ENCODE measurements at regions of chr2 and their contacts with region 1.

Region 1: DNA sequence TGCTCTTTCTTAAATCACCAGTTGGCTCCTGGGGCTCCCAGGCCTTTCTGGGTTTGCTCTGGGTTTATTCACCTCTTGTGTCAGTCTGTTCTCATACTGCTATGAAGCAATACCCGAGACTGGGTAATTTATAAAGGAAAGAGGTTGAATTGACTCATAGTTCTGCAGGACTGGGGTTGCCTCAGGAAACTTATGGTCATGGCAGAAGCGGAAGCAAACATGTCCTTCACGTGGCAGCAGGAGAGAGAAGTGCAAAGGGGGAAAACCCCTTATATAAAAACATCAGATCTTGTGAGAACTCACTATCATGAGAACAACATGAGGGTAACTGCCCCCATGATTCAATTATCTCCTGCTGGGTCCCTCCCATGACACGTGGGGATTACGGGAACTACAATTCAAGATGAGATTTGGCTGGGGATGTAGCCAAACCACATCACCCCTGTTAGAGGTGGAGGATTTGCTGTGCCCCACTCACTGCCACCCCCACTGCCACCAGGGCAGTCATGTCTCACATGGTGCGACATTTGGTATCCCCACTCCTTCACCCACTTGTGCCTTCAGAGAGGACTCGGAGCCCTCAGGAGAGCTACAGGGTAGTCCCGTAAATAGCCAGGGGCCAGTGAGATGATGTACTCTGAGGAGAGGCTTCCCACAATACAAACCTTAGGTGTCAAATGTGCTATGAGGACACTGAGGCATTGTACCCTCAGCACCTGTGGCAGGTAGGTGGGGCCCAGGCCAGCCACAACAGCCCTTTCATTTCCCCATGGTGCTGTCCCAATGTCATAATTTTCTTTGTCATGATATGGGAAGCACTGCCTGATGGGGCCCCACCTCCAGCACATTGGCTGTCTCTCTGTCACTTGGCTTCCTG is 35.7 kb downstream of the CDC42EP3 start:
- DNase-seq: peak; percentile 87
- ATAC-seq: peak; percentile 81
- H3K4me3 Mint-ChIP-seq: peak overlapping the region; percentile 49
- H3K27ac Mint-ChIP-seq: peak overlapping the region; percentile 99
- H3K4me1 Mint-ChIP-seq: peaks cover 70% of the 10 kb centered on the region
- H3K27me3 Mint-ChIP-seq: no peaks in the 10 kb centered on the region
- CTCF ChIP-seq: no peak

Region 2: DNA sequence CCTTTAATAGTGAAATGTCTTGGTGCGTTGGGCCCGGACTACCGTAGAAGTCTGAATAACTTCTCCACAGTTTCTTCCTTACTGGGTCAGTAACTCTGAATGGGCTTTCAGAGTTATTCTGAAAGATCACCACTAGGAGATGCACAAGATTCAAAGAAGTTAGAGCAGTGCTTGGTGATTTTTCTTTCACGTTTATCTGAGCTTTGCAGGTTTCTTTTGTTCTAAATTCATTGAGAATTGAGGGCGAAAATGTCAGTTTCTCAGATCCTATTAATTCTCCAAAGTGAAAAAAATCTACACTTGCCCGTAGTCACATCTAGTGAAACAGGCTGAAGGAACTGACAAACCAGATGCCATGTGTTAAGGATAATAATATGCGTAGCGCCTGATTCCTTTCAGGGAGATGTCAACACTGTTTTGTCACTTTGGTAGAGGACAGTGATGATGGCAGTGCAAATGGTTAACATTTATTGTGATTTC is 221.2 kb before region 1 on chr2:
- CTCF ChIA-PET with region 1: interaction called, 4 read pairs
- POLR2A ChIA-PET with region 1: no interaction called
- intact Hi-C with region 1: loop called (anchors 10 kb)
- DNase-seq: no peak
- ATAC-seq: peak; percentile 53
- H3K4me3 Mint-ChIP-seq: no peak overlapping the region
- H3K27ac Mint-ChIP-seq: no peak overlapping the region
- H3K4me1 Mint-ChIP-seq: peaks cover 12% of the 10 kb centered on the region
- H3K27me3 Mint-ChIP-seq: no peaks in the 10 kb centered on the region
- CTCF ChIP-seq: peak; percentile 75

Region 3: GRCh38 chr2:37585982-37586621 is 49.6 kb before region 1 on chr2:
- CTCF ChIA-PET with region 1: no interaction called
- POLR2A ChIA-PET with region 1: interaction called, 3 read pairs
- intact Hi-C with region 1: loop called (anchors 5 kb)
- DNase-seq: peak; percentile 84
- ATAC-seq: peak; percentile 76
- H3K4me3 Mint-ChIP-seq: peak overlapping the region; percentile 40
- H3K27ac Mint-ChIP-seq: peak overlapping the region; percentile 85
- H3K4me1 Mint-ChIP-seq: peaks cover 91% of the 10 kb centered on the region
- H3K27me3 Mint-ChIP-seq: no peaks in the 10 kb centered on the region
- CTCF ChIP-seq: no peak

Region 4: GRCh38 chr2:37600735-37601134 is 35.0 kb before region 1 on chr2:
- CTCF ChIA-PET with region 1: no interaction called
- POLR2A ChIA-PET with region 1: no interaction called
- intact Hi-C with region 1: loop called (anchors 5 kb)
- DNase-seq: no peak
- ATAC-seq: peak; percentile 48
- H3K4me3 Mint-ChIP-seq: peak overlapping the region; percentile 71
- H3K27ac Mint-ChIP-seq: peak overlapping the region; percentile 92
- H3K4me1 Mint-ChIP-seq: peaks cover 52% of the 10 kb centered on the region
- H3K27me3 Mint-ChIP-seq: no peaks in the 10 kb centered on the region
- CTCF ChIP-seq: no peak

Region 5: GRCh38 chr2:37623971-37624900 is 11.5 kb before region 1 on chr2:
- CTCF ChIA-PET with region 1: interaction called, 3 read pairs
- POLR2A ChIA-PET with region 1: interaction called, 10 read pairs
- intact Hi-C with region 1: no loop called
- DNase-seq: peak; percentile 61
- ATAC-seq: peak; percentile 82
- H3K4me3 Mint-ChIP-seq: peak overlapping the region; percentile 41
- H3K27ac Mint-ChIP-seq: peak overlapping the region; percentile 87
- H3K4me1 Mint-ChIP-seq: peaks cover 85% of the 10 kb centered on the region
- H3K27me3 Mint-ChIP-seq: no peaks in the 10 kb centered on the region
- CTCF ChIP-seq: no peak

Region 6: GRCh38 chr2:38734299-38735058 is 1098.7 kb after region 1 on chr2:
- CTCF ChIA-PET with region 1: no interaction called
- POLR2A ChIA-PET with region 1: no interaction called
- intact Hi-C with region 1: no loop called
- DNase-seq: no peak
- ATAC-seq: no peak
- H3K4me3 Mint-ChIP-seq: no peak overlapping the region
- H3K27ac Mint-ChIP-seq: peak overlapping the region; percentile 50
- H3K4me1 Mint-ChIP-seq: peaks cover 10% of the 10 kb centered on the region
- H3K27me3 Mint-ChIP-seq: no peaks in the 10 kb centered on the region
- CTCF ChIP-seq: no peak